Activated CD4-positive, alpha-beta T cell treated with anti-CD3 and anti-CD28 coated beads, Interleukin-2, amount 10 ng/mL, durations not matched to agents 24 days and 14 days (primary cell): ENCODE measurements at regions of chr2 and their contacts with region 1.

Region 1: GRCh38 chr2:216404010-216404618 is 8.2 kb upstream of the SMARCAL1 start:
- DNase-seq: peak; percentile 82
- H3K4me3 Mint-ChIP-seq: no peak overlapping the region
- H3K27ac Mint-ChIP-seq: no peak overlapping the region
- H3K4me1 Mint-ChIP-seq: no peaks in the 10 kb centered on the region
- H3K27me3 Mint-ChIP-seq: peaks cover 26% of the 10 kb centered on the region

Region 2: GRCh38 chr2:216328347-216328746 is 75.8 kb before region 1 on chr2:
- intact Hi-C with region 1: loop called (anchors 5 kb)
- DNase-seq: no peak
- H3K4me3 Mint-ChIP-seq: no peak overlapping the region
- H3K27ac Mint-ChIP-seq: no peak overlapping the region
- H3K4me1 Mint-ChIP-seq: no peaks in the 10 kb centered on the region
- H3K27me3 Mint-ChIP-seq: peaks cover 12% of the 10 kb centered on the region

Region 3: GRCh38 chr2:216498418-216499413 is 94.6 kb after region 1 on chr2 and contains the start of gene RPL37A:
- intact Hi-C with region 1: no loop called
- DNase-seq: peak; percentile 97
- H3K4me3 Mint-ChIP-seq: peak within 1 kb of the TSS; percentile 100
- H3K27ac Mint-ChIP-seq: peak within 1 kb of the TSS; percentile 95
- H3K4me1 Mint-ChIP-seq: peaks cover 50% of the 10 kb centered on the region
- H3K27me3 Mint-ChIP-seq: no peaks in the 10 kb centered on the region
- total RNA-seq, gene RPL37A: 3,125 and 3,168 TPM in 2 replicates